Colonic mucosa (tissue), 4 donors: ENCODE measurements at regions of chr22 and their contacts with region 1.

Region 1: GRCh38 chr22:22748297-22748743 is 103.9 kb downstream of the GGTLC2 start:
- DNase-seq: peak; percentile 50
- H3K4me3 ChIP-seq: no peak overlapping the region
- H3K27ac ChIP-seq: no peak overlapping the region
- H3K4me1 ChIP-seq: no peaks in the 10 kb centered on the region
- H3K27me3 ChIP-seq: no peaks in the 10 kb centered on the region
- CTCF ChIP-seq: peak; percentile 54

Region 2: GRCh38 chr22:22463855-22464540 is 284.3 kb before region 1 on chr22:
- intact Hi-C with region 1: loop called (anchors 10 kb)
- DNase-seq: peak; percentile 64
- H3K4me3 ChIP-seq: no peak overlapping the region
- H3K27ac ChIP-seq: no peak overlapping the region
- H3K4me1 ChIP-seq: no peaks in the 10 kb centered on the region
- H3K27me3 ChIP-seq: no peaks in the 10 kb centered on the region
- CTCF ChIP-seq: peak; percentile 72